ENCODE measurements at regions of chr1 and their contacts with region 1.

Region 1: GRCh38 chr1:147252540-147252939 is 10.1 kb downstream of the CHD1L start:
- DNase-seq: no peak

Region 2: DNA sequence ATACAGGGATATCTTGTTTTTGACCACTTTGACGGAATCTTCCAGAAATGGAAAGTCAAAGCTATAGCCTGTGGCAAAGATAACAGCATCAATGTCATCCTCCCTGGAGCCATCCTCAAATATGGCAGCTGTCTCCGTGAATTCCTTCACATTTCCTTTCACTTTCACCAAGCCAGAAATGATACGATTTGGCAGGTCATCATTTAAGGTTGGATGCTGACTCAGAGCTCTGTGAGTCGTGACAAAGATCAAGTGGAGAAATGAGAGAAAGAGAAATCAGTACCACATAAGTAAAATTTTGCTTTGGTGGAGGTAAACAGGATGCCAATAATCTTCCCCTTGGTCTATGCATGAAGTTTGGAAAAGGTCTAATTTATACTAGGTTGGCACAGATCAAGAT is 51.3 kb before region 1 on chr1:
- intact Hi-C with region 1: no loop called
- DNase-seq: no peak

Region 3: DNA sequence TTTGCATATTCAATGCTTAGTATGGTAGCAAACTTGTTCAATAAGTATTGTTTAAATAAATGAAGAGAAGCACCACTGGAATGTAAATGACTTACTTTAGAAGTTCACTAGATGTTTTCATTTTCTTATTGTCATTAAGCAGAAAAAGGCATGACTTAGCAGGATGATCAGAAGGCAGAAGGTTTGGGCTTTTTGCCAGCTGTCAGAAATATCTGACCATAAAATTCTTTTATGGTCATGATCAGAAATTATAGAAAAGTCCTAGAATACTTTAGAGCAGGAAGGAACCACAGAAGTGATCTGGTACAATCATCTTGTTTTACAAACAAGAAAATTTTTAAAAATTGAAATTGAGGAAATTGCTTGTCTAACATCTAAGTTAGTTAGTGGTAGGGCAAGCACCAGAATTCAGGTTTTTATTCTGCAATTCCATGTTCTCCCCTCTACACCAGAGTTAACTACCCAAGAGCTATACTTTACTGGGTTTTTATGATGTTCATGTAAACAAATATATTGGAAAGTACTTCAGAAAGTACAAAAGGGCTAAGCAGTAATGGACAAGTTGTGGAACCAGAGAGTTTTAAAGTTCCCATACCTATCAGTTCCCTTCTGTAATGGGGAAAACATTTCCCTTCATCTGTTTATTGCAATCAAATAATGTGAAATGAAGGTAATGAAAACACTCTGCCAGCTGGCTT is 37.5 kb before region 1 on chr1:
- intact Hi-C with region 1: loop called (anchors 5 kb)
- DNase-seq: no peak

Measured in cardiac septum (tissue), 1 donor.